ENCODE measurements at regions of chr13 and their contacts with region 1.

Region 1: GRCh38 chr13:35649162-35649561 is 172.7 kb upstream of the MAB21L1 start:
- DNase-seq: no peak
- H3K4me3 ChIP-seq: no peak overlapping the region
- CTCF ChIP-seq: no peak

Region 2: DNA sequence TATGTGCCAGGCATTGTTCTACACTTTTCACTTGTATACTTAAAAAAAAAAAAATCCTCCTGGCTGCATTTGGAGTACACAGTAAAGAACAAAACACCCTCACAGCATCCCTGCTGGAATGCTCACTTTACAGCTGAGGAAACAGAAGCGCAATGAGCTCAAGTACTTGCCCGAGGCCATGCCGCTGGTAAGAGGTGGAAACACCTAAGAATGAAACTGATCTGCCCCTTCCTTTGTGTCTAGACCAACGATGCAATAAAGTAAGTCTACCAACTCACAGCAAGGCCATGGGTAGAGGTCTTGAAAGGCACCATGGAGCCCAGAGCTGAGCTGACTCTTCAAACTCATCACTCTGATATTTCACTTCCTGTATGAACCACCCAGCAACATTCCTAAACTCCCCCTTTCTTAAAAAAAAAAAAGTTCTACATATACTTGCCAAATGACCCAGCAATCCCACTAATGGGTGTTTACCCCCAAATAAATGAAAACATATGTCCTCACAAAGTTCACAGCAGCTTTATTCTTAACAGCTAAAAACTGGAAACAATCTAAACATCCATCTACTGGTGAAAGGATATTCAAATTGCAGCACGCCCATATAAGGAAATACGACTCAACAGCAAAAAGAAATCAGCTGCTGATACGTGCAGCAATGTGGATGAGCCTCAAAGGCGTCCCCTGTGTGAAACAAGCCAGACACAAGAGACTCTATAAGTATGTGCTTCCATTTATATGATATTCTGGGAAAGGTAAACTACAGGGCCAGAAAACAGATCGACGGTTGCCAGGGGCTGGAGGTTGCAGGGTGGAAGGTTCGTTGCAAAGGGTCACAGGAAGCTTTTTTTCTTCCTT is 64.0 kb after region 1 on chr13:
- in situ Hi-C with region 1: loop called (anchors 5 kb)
- DNase-seq: no peak
- H3K4me3 ChIP-seq: no peak overlapping the region
- CTCF ChIP-seq: no peak

Region 3: GRCh38 chr13:37385956-37386665 is 1736.9 kb after region 1 on chr13:
- in situ Hi-C with region 1: no loop called
- DNase-seq: no peak
- H3K4me3 ChIP-seq: no peak overlapping the region
- CTCF ChIP-seq: no peak